RWPE1 (cell line): ENCODE measurements at regions of chr17 and their contacts with region 1.

Region 1: GRCh38 chr17:50200457-50201275 is 765 bp downstream of the COL1A1 start:
- DNase-seq: peak; percentile 87
- H3K27ac ChIP-seq: peak overlapping the region; percentile 93
- CTCF ChIP-seq: peak; percentile 100

Region 2: GRCh38 chr17:50139950-50140871 is 60.5 kb before region 1 on chr17:
- CTCF ChIA-PET with region 1: no interaction called
- POLR2A ChIA-PET with region 1: no interaction called
- DNase-seq: peak; percentile 77
- H3K27ac ChIP-seq: peak overlapping the region; percentile 98
- CTCF ChIP-seq: peak; percentile 97

Region 3: DNA sequence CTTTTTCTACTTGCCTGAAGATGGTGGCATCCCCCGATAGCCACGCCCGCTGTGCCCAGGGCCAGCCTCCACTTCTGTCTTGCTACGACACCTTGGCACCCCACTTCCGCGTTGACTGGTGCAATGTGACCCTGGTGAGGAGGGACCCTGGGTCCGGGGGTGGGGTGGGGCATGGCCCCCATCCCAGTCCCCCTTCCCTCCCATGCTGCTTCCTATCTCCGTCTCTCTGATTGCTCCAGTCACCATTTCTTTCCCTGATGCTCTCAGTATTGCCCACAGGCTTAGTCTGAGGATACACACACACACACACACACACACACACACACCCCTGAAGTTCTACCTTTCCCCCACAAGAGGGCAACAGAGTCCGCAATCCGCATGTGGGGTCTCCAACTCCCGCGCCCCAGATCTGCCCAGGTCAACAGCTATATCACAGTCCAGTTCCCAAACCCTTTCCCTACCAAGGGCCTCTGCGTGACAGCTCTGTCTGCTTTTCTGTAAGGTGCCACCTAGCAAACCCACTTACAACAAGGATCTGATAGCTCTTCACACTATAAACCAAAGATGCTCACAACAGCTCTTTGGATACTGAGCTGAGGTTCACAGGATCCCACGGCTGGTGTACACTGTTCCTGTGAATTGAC is 31.4 kb before region 1 on chr17:
- CTCF ChIA-PET with region 1: interaction called, 35 read pairs
- POLR2A ChIA-PET with region 1: no interaction called
- DNase-seq: peak; percentile 57
- H3K27ac ChIP-seq: peak overlapping the region; percentile 33; the same call in 1 of the 2 replicates
- CTCF ChIP-seq: peak; percentile 95

Region 4: GRCh38 chr17:50256826-50257610 is 56.4 kb after region 1 on chr17:
- CTCF ChIA-PET with region 1: no interaction called
- POLR2A ChIA-PET with region 1: no interaction called
- DNase-seq: no peak
- H3K27ac ChIP-seq: no peak overlapping the region
- CTCF ChIP-seq: no peak

Region 5: DNA sequence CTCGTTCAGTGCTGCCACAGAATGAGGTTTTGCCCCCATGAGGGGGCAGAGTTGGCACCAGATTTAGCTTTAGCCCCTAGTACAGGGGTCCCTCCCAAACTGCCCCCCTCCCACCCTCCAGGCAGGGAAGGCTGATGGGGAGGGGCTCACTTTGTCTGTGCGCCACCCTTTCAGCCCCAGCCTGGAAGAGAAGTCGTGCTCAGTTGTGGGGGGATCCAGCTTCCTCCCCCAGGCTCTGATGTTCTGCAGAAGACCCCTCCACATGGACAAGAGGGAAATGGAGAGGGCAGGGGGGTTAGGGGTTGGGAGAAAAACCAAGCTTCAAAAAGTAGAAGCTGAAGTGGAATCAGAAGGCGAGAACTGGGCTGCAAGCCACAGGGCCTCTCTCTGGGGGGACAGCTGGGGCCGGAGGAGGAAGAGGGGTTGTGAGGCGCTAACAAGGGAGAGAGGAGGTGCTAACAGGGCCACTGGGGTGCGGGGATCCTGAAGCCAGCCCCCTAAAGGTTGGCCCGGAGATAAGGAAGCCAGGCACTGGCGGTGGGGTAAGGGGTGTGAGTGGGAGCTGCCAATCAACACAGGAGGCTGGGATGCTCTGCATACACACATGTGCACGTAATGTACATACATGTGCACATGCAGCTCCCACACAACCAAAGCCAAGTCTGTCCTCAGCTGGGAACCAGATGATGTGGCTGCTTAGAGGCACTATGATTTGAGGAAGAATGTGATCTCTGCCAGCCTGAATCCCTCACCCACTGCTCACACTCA is 66.6 kb after region 1 on chr17:
- CTCF ChIA-PET with region 1: interaction called, 15 read pairs
- POLR2A ChIA-PET with region 1: interaction called, 4 read pairs
- DNase-seq: no peak
- H3K27ac ChIP-seq: peak overlapping the region; percentile 57
- CTCF ChIP-seq: no peak

Region 6: DNA sequence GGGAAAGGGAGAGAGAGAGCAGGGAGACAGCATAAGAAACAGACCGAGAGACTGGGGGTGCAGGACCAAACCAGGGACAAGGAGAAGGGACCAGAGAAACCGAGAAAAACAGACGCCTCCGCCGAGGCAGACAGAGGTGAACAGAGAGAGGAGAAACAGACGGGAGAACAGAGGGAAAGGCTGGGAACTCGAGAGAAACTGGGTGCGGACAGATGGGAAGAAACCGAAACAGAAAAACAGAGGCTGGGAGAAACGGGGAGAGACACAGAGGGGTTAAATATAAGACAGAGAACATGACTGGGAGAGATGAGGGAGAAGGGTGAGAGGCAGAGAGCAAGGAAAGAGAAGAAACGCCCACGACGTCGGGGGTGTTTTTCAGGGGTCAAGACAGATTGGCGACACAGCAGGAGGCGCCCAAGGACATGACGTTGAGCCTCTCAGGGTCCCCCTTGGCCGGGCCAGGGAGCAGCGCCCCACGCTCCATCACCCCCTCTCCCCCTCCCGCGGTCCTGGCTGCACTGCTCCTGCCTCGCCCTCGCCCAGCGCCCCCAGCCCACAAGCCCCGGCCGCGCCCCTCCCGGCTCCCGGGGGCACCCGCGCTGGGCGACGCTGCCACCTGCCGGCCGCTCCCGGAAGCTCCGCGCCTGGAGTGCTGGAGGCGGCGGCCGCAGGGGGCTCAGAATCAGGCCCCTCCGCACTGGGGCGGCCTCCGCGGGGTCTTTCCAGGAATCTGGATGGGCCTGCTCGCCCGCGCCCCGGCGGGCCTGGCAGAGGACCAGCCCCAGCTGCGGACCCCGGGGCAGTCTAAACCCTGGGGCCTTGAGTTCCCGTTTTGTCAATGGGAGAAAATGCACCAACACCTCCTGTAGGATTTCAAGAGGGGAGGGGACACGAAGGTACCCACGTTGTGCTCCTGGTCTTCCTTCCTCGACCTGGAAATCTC is 72.3 kb after region 1 on chr17:
- CTCF ChIA-PET with region 1: interaction called, 34 read pairs
- POLR2A ChIA-PET with region 1: interaction called, 4 read pairs
- DNase-seq: peak; percentile 46
- H3K27ac ChIP-seq: peak overlapping the region; percentile 39
- CTCF ChIP-seq: peak; percentile 98

Region 7: GRCh38 chr17:50297407-50297865 is 96.8 kb after region 1 on chr17:
- CTCF ChIA-PET with region 1: interaction called, 104 read pairs
- POLR2A ChIA-PET with region 1: interaction called, 6 read pairs
- DNase-seq: peak; percentile 81
- H3K27ac ChIP-seq: no peak overlapping the region
- CTCF ChIP-seq: peak; percentile 98

Region 8: DNA sequence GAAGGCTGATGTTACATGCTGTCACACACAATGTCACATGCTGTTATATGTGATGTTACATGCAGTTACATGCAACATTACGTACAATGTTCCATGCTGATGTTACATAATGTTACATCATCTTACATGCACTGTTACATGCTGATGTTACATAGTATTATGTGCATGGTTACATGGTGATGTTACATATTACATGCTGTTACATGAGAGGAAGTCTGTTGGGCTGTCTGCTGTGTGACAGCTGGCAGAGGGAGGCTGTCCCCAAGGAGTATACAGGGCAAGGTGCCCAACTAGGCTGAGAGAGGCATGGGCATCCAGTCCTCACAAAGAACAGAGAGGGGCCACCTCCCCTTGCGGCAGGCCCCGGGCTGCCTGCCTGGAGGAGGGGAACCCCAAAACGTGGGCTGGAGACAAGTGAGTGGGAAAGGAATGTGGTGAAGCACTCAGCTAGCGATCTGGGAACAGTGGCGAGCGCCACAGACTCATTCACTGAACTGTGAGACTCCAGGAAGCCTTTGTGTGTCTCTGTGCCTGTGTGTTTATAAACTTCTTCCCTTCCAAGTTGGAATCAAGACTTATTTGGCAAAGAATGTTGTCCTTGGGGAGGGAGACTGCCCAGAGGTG is 104.2 kb after region 1 on chr17:
- CTCF ChIA-PET with region 1: interaction called, 11 read pairs
- POLR2A ChIA-PET with region 1: no interaction called
- DNase-seq: no peak
- H3K27ac ChIP-seq: no peak overlapping the region
- CTCF ChIP-seq: no peak